ENCODE measurements at regions of chr18 and their contacts with region 1.

Region 1: GRCh38 chr18:9117980-9118841 is 15.7 kb downstream of the NDUFV2 start:
- DNase-seq: peak in 2 of 5 donors; percentile 37 to 43
- H3K4me3 ChIP-seq: peak overlapping the region; percentile 43
- H3K4me3 Mint-ChIP-seq: peak overlapping the region; percentile 82 to 94 (median 88)
- H3K27ac ChIP-seq: peak overlapping the region; percentile 76
- H3K27ac Mint-ChIP-seq: peak overlapping the region; percentile 91 to 99 (median 97)
- H3K4me1 ChIP-seq: peaks cover 82% of the 10 kb centered on the region
- H3K4me1 Mint-ChIP-seq: peaks cover 87 to 92% (median 91%) of the 10 kb centered on the region in 3 donors
- H3K27me3 ChIP-seq: no peaks in the 10 kb centered on the region
- H3K27me3 Mint-ChIP-seq: no peaks in the 10 kb centered on the region

Region 2: GRCh38 chr18:9038277-9038871 is 79.8 kb before region 1 on chr18:
- CTCF ChIA-PET with region 1: no interaction called
- POLR2A ChIA-PET with region 1: no interaction called
- DNase-seq: no peak
- H3K4me3 ChIP-seq: no peak overlapping the region
- H3K4me3 Mint-ChIP-seq: no peak overlapping the region
- H3K27ac ChIP-seq: no peak overlapping the region
- H3K27ac Mint-ChIP-seq: peak overlapping the region in 1 of 8 donors; percentile 3
- H3K4me1 ChIP-seq: no peaks in the 10 kb centered on the region
- H3K4me1 Mint-ChIP-seq: no peaks in the 10 kb centered on the region
- H3K27me3 ChIP-seq: no peaks in the 10 kb centered on the region
- H3K27me3 Mint-ChIP-seq: peaks cover 0 to 6% of the 10 kb centered on the region in 2 donors

Region 3: GRCh38 chr18:9102508-9103375 is 15.5 kb before region 1 on chr18 and contains the start of gene NDUFV2:
- CTCF ChIA-PET with region 1: interaction called, 8 read pairs
- POLR2A ChIA-PET with region 1: interaction called, 22 read pairs
- DNase-seq: peak; percentile 95 to 98 (median 97)
- H3K4me3 ChIP-seq: peak within 1 kb of the TSS; percentile 96
- H3K4me3 Mint-ChIP-seq: peak within 1 kb of the TSS; percentile 89 to 97 (median 95)
- H3K27ac ChIP-seq: peak within 1 kb of the TSS; percentile 89
- H3K27ac Mint-ChIP-seq: peak within 1 kb of the TSS; percentile 87 to 99 (median 96)
- H3K4me1 ChIP-seq: peaks cover 42% of the 10 kb centered on the region
- H3K4me1 Mint-ChIP-seq: peaks cover 56 to 60% (median 58%) of the 10 kb centered on the region in 3 donors
- H3K27me3 ChIP-seq: no peaks in the 10 kb centered on the region
- H3K27me3 Mint-ChIP-seq: no peaks in the 10 kb centered on the region
- total RNA-seq, gene NDUFV2: 324 to 331 TPM

Measured in CD8-positive, alpha-beta memory T cell (primary cell).